ENCODE measurements at regions of chr11 and their contacts with region 1.

Region 1: GRCh38 chr11:1652771-1653540 is 23.4 kb downstream of the KRTAP5-5 start:
- DNase-seq: peak; percentile 74
- ATAC-seq: peak; percentile 89
- H3K4me3 Mint-ChIP-seq: no peak overlapping the region
- H3K27ac Mint-ChIP-seq: no peak overlapping the region
- H3K4me1 Mint-ChIP-seq: no peaks in the 10 kb centered on the region
- H3K27me3 Mint-ChIP-seq: peaks cover 14% of the 10 kb centered on the region
- CTCF ChIP-seq: peak; percentile 94

Region 2: GRCh38 chr11:1497600-1497999 is 155.4 kb before region 1 on chr11:
- CTCF ChIA-PET with region 1: no interaction called
- POLR2A ChIA-PET with region 1: no interaction called
- intact Hi-C with region 1: no loop called
- DNase-seq: no peak
- ATAC-seq: no peak
- H3K4me3 Mint-ChIP-seq: no peak overlapping the region
- H3K27ac Mint-ChIP-seq: no peak overlapping the region
- H3K4me1 Mint-ChIP-seq: peaks cover 49% of the 10 kb centered on the region
- H3K27me3 Mint-ChIP-seq: no peaks in the 10 kb centered on the region
- CTCF ChIP-seq: no peak

Region 3: GRCh38 chr11:1628506-1629325 is 24.2 kb before region 1 on chr11:
- CTCF ChIA-PET with region 1: interaction called, 18 read pairs
- POLR2A ChIA-PET with region 1: no interaction called
- intact Hi-C with region 1: no loop called
- DNase-seq: peak; percentile 63
- ATAC-seq: peak; percentile 99
- H3K4me3 Mint-ChIP-seq: no peak overlapping the region
- H3K27ac Mint-ChIP-seq: no peak overlapping the region
- H3K4me1 Mint-ChIP-seq: no peaks in the 10 kb centered on the region
- H3K27me3 Mint-ChIP-seq: peaks cover 14% of the 10 kb centered on the region
- CTCF ChIP-seq: peak; percentile 97

Region 4: GRCh38 chr11:1640076-1640946 is 12.6 kb before region 1 on chr11:
- CTCF ChIA-PET with region 1: interaction called, 86 read pairs
- POLR2A ChIA-PET with region 1: no interaction called
- intact Hi-C with region 1: no loop called
- DNase-seq: peak; percentile 26
- ATAC-seq: peak; percentile 42
- H3K4me3 Mint-ChIP-seq: no peak overlapping the region
- H3K27ac Mint-ChIP-seq: no peak overlapping the region
- H3K4me1 Mint-ChIP-seq: no peaks in the 10 kb centered on the region
- H3K27me3 Mint-ChIP-seq: peaks cover 9% of the 10 kb centered on the region
- CTCF ChIP-seq: peak; percentile 95

Region 5: GRCh38 chr11:1682225-1682905 is 29.4 kb after region 1 on chr11:
- CTCF ChIA-PET with region 1: interaction called, 44 read pairs
- POLR2A ChIA-PET with region 1: no interaction called
- intact Hi-C with region 1: no loop called
- DNase-seq: no peak
- ATAC-seq: no peak
- H3K4me3 Mint-ChIP-seq: no peak overlapping the region
- H3K27ac Mint-ChIP-seq: no peak overlapping the region
- H3K4me1 Mint-ChIP-seq: no peaks in the 10 kb centered on the region
- H3K27me3 Mint-ChIP-seq: peaks cover 7% of the 10 kb centered on the region
- CTCF ChIP-seq: no peak

Region 6: GRCh38 chr11:1827095-1827813 is 174.3 kb after region 1 on chr11:
- CTCF ChIA-PET with region 1: interaction called, 95 read pairs
- POLR2A ChIA-PET with region 1: no interaction called
- intact Hi-C with region 1: loop called (anchors 5 kb)
- DNase-seq: no peak
- ATAC-seq: no peak
- H3K4me3 Mint-ChIP-seq: no peak overlapping the region
- H3K27ac Mint-ChIP-seq: no peak overlapping the region
- H3K4me1 Mint-ChIP-seq: no peaks in the 10 kb centered on the region
- H3K27me3 Mint-ChIP-seq: no peaks in the 10 kb centered on the region
- CTCF ChIP-seq: no peak

Region 7: GRCh38 chr11:2002807-2003206 is 349.9 kb after region 1 on chr11:
- CTCF ChIA-PET with region 1: interaction called, 21 read pairs
- POLR2A ChIA-PET with region 1: no interaction called
- intact Hi-C with region 1: no loop called
- DNase-seq: no peak
- ATAC-seq: peak; percentile 76
- H3K4me3 Mint-ChIP-seq: no peak overlapping the region
- H3K27ac Mint-ChIP-seq: no peak overlapping the region
- H3K4me1 Mint-ChIP-seq: no peaks in the 10 kb centered on the region
- H3K27me3 Mint-ChIP-seq: no peaks in the 10 kb centered on the region
- CTCF ChIP-seq: no peak

Measured in activated CD8-positive, alpha-beta T cell treated with anti-CD3 and anti-CD28 coated beads for 36 hours (primary cell).